ENCODE measurements at regions of chr6 and their contacts with region 1.

Region 1: GRCh38 chr6:107820338-107821261 is 3.5 kb downstream of the SCML4 start:
- DNase-seq: peak; percentile 69
- ATAC-seq: no peak
- H3K4me3 ChIP-seq: peak overlapping the region in 4 of 5 experiments; percentile 7 to 43 (median 29)
- H3K4me3 Mint-ChIP-seq: peak overlapping the region; percentile 68
- H3K27ac ChIP-seq: peak overlapping the region; percentile 31 to 95
- H3K27ac Mint-ChIP-seq: peak overlapping the region; percentile 70
- H3K4me1 ChIP-seq: peaks cover 51 to 64% of the 10 kb centered on the region in 2 donors
- H3K4me1 Mint-ChIP-seq: peaks cover 71% of the 10 kb centered on the region
- H3K27me3 ChIP-seq: no peaks in the 10 kb centered on the region
- H3K27me3 Mint-ChIP-seq: no peaks in the 10 kb centered on the region
- CTCF ChIP-seq: no peak

Region 2: GRCh38 chr6:107459283-107460082 is 361.1 kb before region 1 on chr6 and contains the start of gene PDSS2:
- CTCF ChIA-PET with region 1: interaction called, 4 read pairs
- POLR2A ChIA-PET with region 1: interaction called, 3 read pairs
- intact Hi-C with region 1: loop called (anchors 2 kb)
- DNase-seq: peak; percentile 96
- ATAC-seq: peak; percentile 96
- H3K4me3 ChIP-seq: peak within 1 kb of the TSS; percentile 70 to 96 (median 93)
- H3K4me3 Mint-ChIP-seq: peak within 1 kb of the TSS; percentile 88
- H3K27ac ChIP-seq: peak within 1 kb of the TSS; percentile 88 to 91
- H3K27ac Mint-ChIP-seq: peak within 1 kb of the TSS; percentile 99
- H3K4me1 ChIP-seq: peaks cover 10 to 13% of the 10 kb centered on the region in 2 donors
- H3K4me1 Mint-ChIP-seq: peaks cover 25% of the 10 kb centered on the region
- H3K27me3 ChIP-seq: no peaks in the 10 kb centered on the region
- H3K27me3 Mint-ChIP-seq: no peaks in the 10 kb centered on the region
- CTCF ChIP-seq: peak; percentile 52
- total RNA-seq, gene PDSS2: 16.9 and 18.3 TPM in 2 replicates

Region 3: DNA sequence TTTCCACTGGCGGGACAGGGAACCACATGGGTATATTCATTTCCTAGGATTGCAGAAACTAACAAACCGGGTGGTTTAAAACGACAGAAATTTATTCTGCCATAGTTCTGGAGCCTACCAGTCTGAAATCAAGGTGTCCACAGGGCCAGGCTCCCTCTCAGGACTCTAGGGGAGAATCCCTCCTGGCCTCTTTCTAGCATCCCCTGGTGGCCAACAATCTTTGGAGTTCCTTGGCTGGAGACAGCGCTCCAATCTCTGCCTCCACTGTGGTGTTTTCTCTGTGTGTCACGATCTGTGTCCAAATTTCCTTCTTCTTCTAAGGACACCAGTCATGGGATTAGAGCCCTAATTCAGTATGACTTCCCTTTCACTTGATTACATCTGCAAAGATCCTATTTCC is 91.5 kb before region 1 on chr6:
- CTCF ChIA-PET with region 1: no interaction called
- POLR2A ChIA-PET with region 1: no interaction called
- intact Hi-C with region 1: loop called (anchors 5 kb)
- DNase-seq: no peak
- ATAC-seq: no peak
- H3K4me3 ChIP-seq: no peak overlapping the region
- H3K4me3 Mint-ChIP-seq: no peak overlapping the region
- H3K27ac ChIP-seq: no peak overlapping the region
- H3K27ac Mint-ChIP-seq: no peak overlapping the region
- H3K4me1 ChIP-seq: peaks cover 26 to 31% of the 10 kb centered on the region in 2 donors
- H3K4me1 Mint-ChIP-seq: peaks cover 39% of the 10 kb centered on the region
- H3K27me3 ChIP-seq: no peaks in the 10 kb centered on the region
- H3K27me3 Mint-ChIP-seq: no peaks in the 10 kb centered on the region
- CTCF ChIP-seq: no peak

Region 4: DNA sequence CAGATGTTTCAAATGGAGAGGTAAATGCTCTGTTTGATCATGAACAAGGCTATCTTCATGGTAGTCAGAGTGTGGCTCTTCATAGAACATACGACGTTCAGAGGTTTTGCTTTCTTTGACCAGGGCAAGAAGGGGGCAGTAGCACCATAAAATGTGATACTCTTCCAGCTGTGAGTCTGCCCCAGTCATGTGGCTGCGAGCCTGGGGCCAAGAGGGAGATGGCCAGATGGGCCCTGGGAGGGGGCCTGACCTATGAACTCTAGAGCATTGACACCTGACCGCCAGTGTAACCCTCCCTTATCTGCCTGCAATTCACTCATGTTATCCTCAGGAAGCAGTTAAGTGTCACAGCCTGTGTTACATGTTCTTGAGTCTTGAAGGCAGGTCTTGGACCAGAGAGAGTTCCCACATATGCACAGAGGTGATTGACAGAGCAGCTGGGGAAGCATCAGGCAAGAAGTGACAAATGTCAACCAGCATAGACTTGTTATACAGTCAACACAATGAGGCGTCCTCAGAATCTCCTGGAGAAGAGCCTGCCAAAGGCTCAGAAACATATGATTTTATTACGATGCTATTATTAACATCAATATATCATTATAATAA is 51.4 kb before region 1 on chr6:
- CTCF ChIA-PET with region 1: no interaction called
- POLR2A ChIA-PET with region 1: no interaction called
- intact Hi-C with region 1: no loop called
- DNase-seq: no peak
- ATAC-seq: no peak
- H3K4me3 ChIP-seq: no peak overlapping the region
- H3K4me3 Mint-ChIP-seq: no peak overlapping the region
- H3K27ac ChIP-seq: no peak overlapping the region
- H3K27ac Mint-ChIP-seq: no peak overlapping the region
- H3K4me1 ChIP-seq: no peaks in the 10 kb centered on the region
- H3K4me1 Mint-ChIP-seq: no peaks in the 10 kb centered on the region
- H3K27me3 ChIP-seq: no peaks in the 10 kb centered on the region
- H3K27me3 Mint-ChIP-seq: no peaks in the 10 kb centered on the region
- CTCF ChIP-seq: no peak

Region 5: DNA sequence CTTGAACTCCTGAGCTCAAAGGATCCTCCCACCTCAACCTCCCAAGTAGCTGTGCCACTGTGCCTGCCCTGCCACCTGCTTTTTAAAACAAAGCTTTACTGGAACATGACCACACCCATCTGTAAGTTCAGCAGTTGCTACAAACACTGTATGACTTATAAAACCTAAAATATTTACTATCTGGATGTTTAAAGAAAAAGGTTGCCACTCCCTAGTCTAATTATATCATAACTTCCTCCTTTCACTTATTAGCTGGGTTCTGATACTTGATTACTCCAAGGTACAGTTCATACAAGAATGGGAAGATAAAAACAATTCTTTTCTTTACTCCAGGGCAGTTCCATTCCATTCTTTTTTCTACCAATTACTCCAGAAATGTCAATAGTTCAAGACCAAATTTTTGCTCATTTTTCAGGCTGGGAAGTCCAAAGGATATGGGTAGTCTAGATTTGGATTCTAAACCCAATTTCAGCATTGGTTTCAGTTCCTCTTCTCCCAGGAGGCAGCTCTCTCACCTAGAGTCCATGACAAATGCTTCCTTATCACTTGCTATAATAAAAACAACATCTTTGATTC is 74.3 kb after region 1 on chr6:
- CTCF ChIA-PET with region 1: interaction called, 5 read pairs
- POLR2A ChIA-PET with region 1: no interaction called
- intact Hi-C with region 1: loop called (anchors 5 kb)
- DNase-seq: peak; percentile 77
- ATAC-seq: peak; percentile 80
- H3K4me3 ChIP-seq: peak overlapping the region in 1 of 5 experiments; percentile 27
- H3K4me3 Mint-ChIP-seq: peak overlapping the region; percentile 48
- H3K27ac ChIP-seq: peak overlapping the region; percentile 75 to 76
- H3K27ac Mint-ChIP-seq: peak overlapping the region; percentile 96
- H3K4me1 ChIP-seq: peaks cover 49 to 53% of the 10 kb centered on the region in 2 donors
- H3K4me1 Mint-ChIP-seq: peaks cover 55% of the 10 kb centered on the region
- H3K27me3 ChIP-seq: no peaks in the 10 kb centered on the region
- H3K27me3 Mint-ChIP-seq: no peaks in the 10 kb centered on the region
- CTCF ChIP-seq: no peak

Region 6: GRCh38 chr6:108558372-108559096 is 737.9 kb after region 1 on chr6:
- CTCF ChIA-PET with region 1: no interaction called
- POLR2A ChIA-PET with region 1: no interaction called
- intact Hi-C with region 1: loop called (anchors 2 kb)
- DNase-seq: peak; percentile 99
- ATAC-seq: peak; percentile 64
- H3K4me3 ChIP-seq: peak overlapping the region; percentile 83 to 98 (median 96)
- H3K4me3 Mint-ChIP-seq: peak overlapping the region; percentile 100
- H3K27ac ChIP-seq: peak overlapping the region; percentile 100
- H3K27ac Mint-ChIP-seq: peak overlapping the region; percentile 100
- H3K4me1 ChIP-seq: peaks cover 17 to 20% of the 10 kb centered on the region in 2 donors
- H3K4me1 Mint-ChIP-seq: peaks cover 22% of the 10 kb centered on the region
- H3K27me3 ChIP-seq: peaks cover 0 to 6% (median 0%) of the 10 kb centered on the region in 4 experiments
- H3K27me3 Mint-ChIP-seq: peaks cover 5% of the 10 kb centered on the region
- CTCF ChIP-seq: no peak

Measured in B cell (primary cell).